PC-9 (cell line): ENCODE measurements at regions of chr18 and their contacts with region 1.

Region 1: DNA sequence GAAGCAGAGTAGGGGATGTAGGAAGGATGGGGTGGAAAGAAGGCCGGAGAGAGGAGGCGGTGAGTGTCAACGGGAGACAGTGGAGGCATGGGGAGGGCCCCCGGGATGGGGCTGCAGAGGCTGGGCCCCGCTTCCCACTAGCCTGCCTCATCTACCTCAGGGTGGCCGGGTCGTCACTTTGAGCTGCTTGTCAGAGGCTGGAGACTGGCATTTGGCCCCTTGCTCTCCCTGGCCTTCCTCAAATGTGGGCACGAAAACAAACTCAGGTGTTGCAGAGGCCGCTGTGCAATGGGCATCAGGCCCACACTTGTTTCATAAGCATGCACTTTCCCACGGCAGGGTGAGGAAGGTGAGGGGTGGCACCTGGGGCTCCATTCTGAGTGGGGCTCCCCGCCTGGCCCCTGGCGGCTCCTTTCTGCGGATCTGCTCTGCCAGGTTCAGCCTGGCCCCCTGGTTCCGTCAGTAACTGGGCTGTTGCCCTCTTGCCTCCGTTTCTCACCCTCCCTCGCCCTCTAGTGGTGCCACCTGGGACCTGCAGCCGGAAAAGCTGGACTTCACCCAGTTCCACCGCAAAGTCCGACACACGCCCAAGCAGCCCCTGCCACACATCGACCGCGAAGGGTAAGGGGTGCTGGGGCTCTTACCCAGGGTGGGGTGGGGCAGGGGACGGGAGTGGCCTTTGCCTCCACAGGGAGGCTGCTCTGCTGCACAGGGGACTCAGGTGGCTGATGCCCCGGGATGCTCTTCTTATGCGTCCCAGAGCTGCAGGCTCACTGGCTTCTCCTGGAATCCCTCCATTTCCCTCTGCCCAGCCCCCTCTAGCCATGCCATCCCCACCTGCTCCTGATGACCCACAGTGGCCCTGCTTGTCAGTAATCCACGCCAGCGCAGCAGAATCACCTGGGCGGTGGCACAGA is 125.4 kb downstream of the CTIF start:
- DNase-seq: peak in 1 of 2 experiments; percentile 54
- H3K4me3 ChIP-seq: no peak overlapping the region
- H3K27ac ChIP-seq: no peak overlapping the region
- H3K4me1 ChIP-seq: peaks cover 34% of the 10 kb centered on the region
- H3K27me3 ChIP-seq: no peaks in the 10 kb centered on the region
- CTCF ChIP-seq: peak; percentile 92

Region 2: DNA sequence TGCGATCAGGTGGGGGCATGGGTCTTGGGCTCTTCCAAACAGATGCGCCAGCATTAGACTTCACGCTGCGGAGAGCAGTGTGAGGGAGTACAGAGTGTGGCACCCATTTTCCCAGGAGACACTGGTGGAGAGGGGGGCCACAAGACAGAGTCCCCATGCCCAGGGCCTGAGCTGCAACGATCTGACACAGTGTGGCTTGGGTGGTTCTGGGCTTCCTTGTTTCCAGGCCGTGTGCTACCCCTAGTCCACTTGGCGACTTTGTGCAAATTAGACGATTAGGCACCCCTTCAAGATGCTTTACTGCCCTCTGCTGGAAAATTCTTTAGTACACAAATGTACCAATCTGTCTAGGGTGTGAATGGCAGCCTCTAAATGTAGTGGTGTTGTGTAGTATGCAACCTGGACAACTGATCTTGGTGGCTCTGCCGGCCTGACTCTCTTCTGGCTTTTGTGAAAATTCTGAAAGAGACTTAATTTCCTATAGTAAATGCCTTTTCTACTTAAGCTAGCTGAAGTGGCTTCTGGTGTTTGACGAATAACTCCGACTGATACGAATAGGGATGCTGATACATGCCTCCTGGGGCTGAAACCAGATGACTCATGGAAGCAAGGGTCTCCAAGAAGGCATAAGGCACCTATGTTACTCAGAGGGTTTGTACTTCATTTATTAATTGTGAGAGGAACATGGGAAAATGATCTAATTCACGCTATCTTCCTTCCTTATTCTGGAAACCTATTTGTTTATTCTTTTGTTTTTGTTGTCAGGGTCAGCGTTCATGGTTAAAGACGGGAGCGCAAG is 641.5 kb before region 1 on chr18:
- CTCF ChIA-PET with region 1: no interaction called
- POLR2A ChIA-PET with region 1: no interaction called
- intact Hi-C with region 1: loop called (anchors 5 kb)
- DNase-seq: peak in 1 of 2 experiments; percentile 71
- H3K4me3 ChIP-seq: no peak overlapping the region
- H3K27ac ChIP-seq: no peak overlapping the region
- H3K4me1 ChIP-seq: peaks cover 21% of the 10 kb centered on the region
- H3K27me3 ChIP-seq: peaks cover 10% of the 10 kb centered on the region; the same call in 1 of the 2 replicates
- CTCF ChIP-seq: peak; percentile 76

Region 3: GRCh38 chr18:48475635-48476549 is 188.3 kb before region 1 on chr18:
- CTCF ChIA-PET with region 1: no interaction called
- POLR2A ChIA-PET with region 1: no interaction called
- intact Hi-C with region 1: loop called (anchors 1 kb)
- DNase-seq: peak; percentile 50 to 70
- H3K4me3 ChIP-seq: no peak overlapping the region
- H3K27ac ChIP-seq: no peak overlapping the region
- H3K4me1 ChIP-seq: no peaks in the 10 kb centered on the region
- H3K27me3 ChIP-seq: no peaks in the 10 kb centered on the region
- CTCF ChIP-seq: peak; percentile 90

Region 4: GRCh38 chr18:48538531-48539405 is 125.4 kb before region 1 on chr18 and contains the start of gene CTIF:
- CTCF ChIA-PET with region 1: no interaction called
- POLR2A ChIA-PET with region 1: no interaction called
- intact Hi-C with region 1: loop called (anchors 1 kb)
- DNase-seq: peak; percentile 89 to 91
- H3K4me3 ChIP-seq: peak within 1 kb of the TSS; percentile 97
- H3K27ac ChIP-seq: no peak within 1 kb of the TSS
- H3K4me1 ChIP-seq: peaks cover 30% of the 10 kb centered on the region
- H3K27me3 ChIP-seq: no peaks in the 10 kb centered on the region
- CTCF ChIP-seq: no peak
- total RNA-seq, gene CTIF: 17.0 and 26.2 TPM in 2 replicates

Region 5: DNA sequence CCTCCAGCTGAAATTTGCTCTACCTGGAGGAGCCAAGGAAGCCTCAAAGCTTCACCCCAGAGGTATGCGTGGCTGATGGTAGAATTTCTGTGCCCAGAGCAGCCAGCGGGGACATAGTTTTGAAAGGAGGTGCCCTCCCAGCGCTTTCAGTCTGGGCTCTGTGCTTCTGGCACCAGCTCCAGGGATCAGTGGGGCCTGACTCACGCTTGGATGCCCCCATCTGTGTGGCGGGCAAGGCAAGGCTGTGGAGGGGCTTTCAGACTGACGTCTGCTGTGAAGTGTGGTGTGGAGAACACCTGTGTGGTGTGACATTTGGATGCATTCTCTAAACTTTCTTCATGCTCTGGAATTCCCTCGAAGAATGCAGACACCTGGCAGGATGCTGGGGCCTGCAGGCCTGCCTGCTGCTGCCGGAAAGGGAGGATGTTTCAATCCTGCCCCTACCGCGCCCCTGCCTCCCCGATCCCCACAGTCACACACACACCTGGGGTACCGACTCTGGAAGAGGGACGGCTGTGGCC is 41.2 kb before region 1 on chr18:
- CTCF ChIA-PET with region 1: no interaction called
- POLR2A ChIA-PET with region 1: no interaction called
- intact Hi-C with region 1: loop called (anchors 5 kb)
- DNase-seq: peak; percentile 54 to 79
- H3K4me3 ChIP-seq: no peak overlapping the region
- H3K27ac ChIP-seq: peak overlapping the region; percentile 61
- H3K4me1 ChIP-seq: peaks cover 35% of the 10 kb centered on the region
- H3K27me3 ChIP-seq: no peaks in the 10 kb centered on the region
- CTCF ChIP-seq: no peak

Region 6: DNA sequence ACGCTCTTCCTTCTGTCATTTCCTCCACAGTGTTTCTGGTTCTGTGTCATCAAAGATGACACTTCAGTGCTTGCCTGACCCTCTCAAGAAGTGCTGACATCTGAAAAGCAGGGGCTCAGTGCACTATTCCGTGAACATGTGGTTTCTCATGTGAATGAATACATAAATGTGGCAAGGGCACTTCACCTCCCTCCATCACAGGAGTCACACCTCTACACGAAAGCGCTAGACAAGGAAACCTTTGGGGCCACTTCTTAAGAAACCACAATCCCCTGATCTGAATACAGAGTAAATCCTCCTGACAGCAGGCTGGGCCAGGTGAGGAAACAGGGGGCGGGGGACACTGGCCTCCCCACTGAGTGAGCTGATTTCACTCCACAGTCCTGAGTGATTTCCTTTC is 1295.0 kb after region 1 on chr18:
- CTCF ChIA-PET with region 1: no interaction called
- POLR2A ChIA-PET with region 1: no interaction called
- intact Hi-C with region 1: no loop called
- DNase-seq: no peak
- H3K4me3 ChIP-seq: no peak overlapping the region
- H3K27ac ChIP-seq: no peak overlapping the region
- H3K4me1 ChIP-seq: no peaks in the 10 kb centered on the region
- H3K27me3 ChIP-seq: no peaks in the 10 kb centered on the region
- CTCF ChIP-seq: no peak